Posterior cingulate gyrus (tissue), 11 donors: ENCODE measurements at regions of chr1 and their contacts with region 1.

Region 1: GRCh38 chr1:85464497-85465098 is 361 bp downstream of the DDAH1 start:
- DNase-seq: peak in 9 of 10 donors; percentile 27 to 94 (median 49)

Region 2: DNA sequence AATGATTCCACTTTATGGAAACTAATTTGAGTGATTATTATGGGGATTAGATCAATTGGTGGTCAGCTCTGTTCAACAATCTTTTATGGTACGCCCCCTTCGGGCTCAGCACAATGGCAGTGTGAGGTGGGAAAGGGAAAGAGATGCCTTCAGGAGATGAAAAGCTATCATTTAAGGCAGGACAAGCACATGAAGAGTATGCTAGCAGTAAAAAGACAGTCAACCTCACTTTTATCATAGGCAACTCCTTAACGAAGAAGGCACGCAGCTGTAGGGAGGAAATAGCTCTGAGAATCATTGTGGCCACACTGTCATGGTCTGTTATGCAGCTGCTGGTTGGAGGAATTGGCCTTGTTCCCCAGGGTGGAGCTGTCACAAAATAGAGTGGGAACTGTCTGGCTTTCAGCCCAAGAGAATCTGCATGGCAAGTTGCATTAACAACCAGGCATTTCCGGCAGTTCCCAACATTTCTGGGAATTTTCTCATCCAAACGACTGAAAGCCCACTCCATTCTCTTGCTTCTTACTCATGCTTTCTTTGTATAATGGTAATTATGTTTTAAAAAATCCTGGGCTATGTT is 133.8 kb before region 1 on chr1:
- intact Hi-C with region 1: loop called (anchors 10 kb)
- DNase-seq: peak in 1 of 10 donors; percentile 5